Adrenal gland (tissue), 19 donors: ENCODE measurements at regions of chr11 and their contacts with region 1.

Region 1: DNA sequence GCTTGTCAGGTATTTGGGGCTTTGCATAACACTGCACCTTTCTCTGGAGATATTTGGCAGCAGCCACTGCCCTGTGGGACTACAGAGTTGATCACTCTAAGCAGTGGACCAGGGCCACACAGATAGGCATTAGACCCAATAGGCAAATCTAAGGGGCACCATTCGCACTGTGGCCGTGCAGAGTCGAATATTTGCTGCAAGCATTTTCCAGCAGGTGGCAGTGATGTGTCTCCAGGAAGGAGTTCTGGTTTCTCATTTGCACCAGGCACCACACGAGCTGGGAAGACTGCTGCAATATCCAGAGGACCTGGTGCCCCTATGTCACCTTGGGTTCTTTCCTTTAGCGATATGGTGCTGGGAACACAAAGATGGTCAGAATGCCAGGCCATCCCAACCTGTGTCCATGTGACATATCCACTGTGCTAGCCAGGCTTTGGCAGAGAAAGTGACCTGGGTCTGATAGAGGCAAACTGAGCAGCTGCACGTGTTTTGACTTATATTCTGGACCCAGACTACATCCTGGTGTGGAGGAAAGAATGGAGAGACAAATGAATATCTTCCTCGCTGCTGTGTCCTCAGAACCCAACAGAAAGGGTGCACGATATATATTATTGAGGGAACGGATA is 318.7 kb downstream of the BUD13 start:
- DNase-seq: peak; percentile 27 to 77 (median 47)
- H3K4me3 ChIP-seq: no peak overlapping the region
- H3K27ac ChIP-seq: no peak overlapping the region
- H3K4me1 ChIP-seq: no peaks in the 10 kb centered on the region
- H3K27me3 ChIP-seq: no peaks in the 10 kb centered on the region
- CTCF ChIP-seq: peak; percentile 32 to 59 (median 52)
- POLR2A ChIP-seq: no peak

Region 2: DNA sequence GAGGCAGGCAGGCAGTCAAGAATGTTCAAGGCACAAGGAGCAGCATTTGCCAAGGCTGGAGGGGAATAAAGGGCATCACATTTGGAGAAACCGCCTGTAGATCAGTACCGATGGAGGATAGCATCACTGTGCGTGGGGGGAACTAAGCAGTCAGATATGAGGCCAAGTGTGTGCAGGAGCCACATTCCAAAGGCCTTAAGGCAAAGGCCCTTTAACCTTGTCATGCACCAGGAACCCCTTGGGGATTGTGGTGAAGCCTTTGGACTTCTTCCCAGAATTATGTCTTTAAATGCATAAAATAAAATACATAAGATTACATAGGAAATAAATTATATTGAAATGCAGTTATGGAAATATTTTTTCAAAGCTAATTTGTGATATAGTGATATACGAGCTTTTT is 213.4 kb before region 1 on chr11:
- intact Hi-C with region 1: no loop called
- DNase-seq: no peak
- H3K4me3 ChIP-seq: no peak overlapping the region
- H3K27ac ChIP-seq: no peak overlapping the region
- H3K4me1 ChIP-seq: no peaks in the 10 kb centered on the region
- H3K27me3 ChIP-seq: no peaks in the 10 kb centered on the region
- CTCF ChIP-seq: no peak
- POLR2A ChIP-seq: no peak

Region 3: GRCh38 chr11:116387641-116388040 is 66.5 kb before region 1 on chr11:
- intact Hi-C with region 1: no loop called
- DNase-seq: no peak
- H3K4me3 ChIP-seq: no peak overlapping the region
- H3K27ac ChIP-seq: no peak overlapping the region
- H3K4me1 ChIP-seq: no peaks in the 10 kb centered on the region
- H3K27me3 ChIP-seq: peaks cover 2% of the 10 kb centered on the region
- CTCF ChIP-seq: no peak
- POLR2A ChIP-seq: no peak

Region 4: GRCh38 chr11:116397602-116398084 is 56.5 kb before region 1 on chr11:
- intact Hi-C with region 1: no loop called
- DNase-seq: no peak
- H3K4me3 ChIP-seq: no peak overlapping the region
- H3K27ac ChIP-seq: no peak overlapping the region
- H3K4me1 ChIP-seq: no peaks in the 10 kb centered on the region
- H3K27me3 ChIP-seq: peaks cover 3% of the 10 kb centered on the region
- CTCF ChIP-seq: no peak
- POLR2A ChIP-seq: no peak

Region 5: DNA sequence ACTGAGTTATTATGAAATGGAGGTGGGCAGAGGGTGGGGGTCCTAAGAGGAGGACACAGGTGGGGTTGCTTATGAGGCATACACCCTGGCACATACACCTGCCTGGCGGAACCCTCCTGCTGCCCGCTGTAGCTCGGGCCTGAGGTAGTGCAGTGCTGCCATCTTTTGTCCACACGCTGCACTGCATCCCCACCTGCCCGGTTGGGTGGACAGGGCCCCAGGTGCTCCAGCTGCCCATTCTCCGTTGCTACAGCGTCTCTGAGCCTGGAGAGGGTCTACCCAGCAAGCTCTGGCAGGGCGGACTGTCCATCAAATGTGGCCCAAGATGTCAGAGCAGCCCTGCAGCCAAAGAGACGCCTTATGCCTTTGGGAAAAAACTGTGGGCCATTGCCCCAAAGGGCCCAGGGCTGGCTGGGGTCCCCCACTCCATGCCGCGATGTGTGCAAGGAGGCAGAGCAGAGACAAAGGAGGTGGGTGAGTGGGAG is 187.5 kb after region 1 on chr11:
- intact Hi-C with region 1: loop called in 1 of 2 experiments (anchors 10 kb)
- DNase-seq: peak; percentile 27 to 75 (median 47)
- H3K4me3 ChIP-seq: no peak overlapping the region
- H3K27ac ChIP-seq: no peak overlapping the region
- H3K4me1 ChIP-seq: no peaks in the 10 kb centered on the region
- H3K27me3 ChIP-seq: no peaks in the 10 kb centered on the region
- CTCF ChIP-seq: peak; percentile 40 to 74 (median 64)
- POLR2A ChIP-seq: no peak

Region 6: GRCh38 chr11:116691771-116692177 is 237.6 kb after region 1 on chr11:
- intact Hi-C with region 1: loop called in 1 of 2 experiments (anchors 2 kb)
- DNase-seq: peak in 6 of 7 donors; percentile 26 to 61 (median 38)
- H3K4me3 ChIP-seq: no peak overlapping the region
- H3K27ac ChIP-seq: no peak overlapping the region
- H3K4me1 ChIP-seq: no peaks in the 10 kb centered on the region
- H3K27me3 ChIP-seq: no peaks in the 10 kb centered on the region
- CTCF ChIP-seq: peak; percentile 61 to 78 (median 72)
- POLR2A ChIP-seq: no peak